Heart right ventricle (tissue), 16 donors: ENCODE measurements at regions of chr5 and their contacts with region 1.

Region 1: DNA sequence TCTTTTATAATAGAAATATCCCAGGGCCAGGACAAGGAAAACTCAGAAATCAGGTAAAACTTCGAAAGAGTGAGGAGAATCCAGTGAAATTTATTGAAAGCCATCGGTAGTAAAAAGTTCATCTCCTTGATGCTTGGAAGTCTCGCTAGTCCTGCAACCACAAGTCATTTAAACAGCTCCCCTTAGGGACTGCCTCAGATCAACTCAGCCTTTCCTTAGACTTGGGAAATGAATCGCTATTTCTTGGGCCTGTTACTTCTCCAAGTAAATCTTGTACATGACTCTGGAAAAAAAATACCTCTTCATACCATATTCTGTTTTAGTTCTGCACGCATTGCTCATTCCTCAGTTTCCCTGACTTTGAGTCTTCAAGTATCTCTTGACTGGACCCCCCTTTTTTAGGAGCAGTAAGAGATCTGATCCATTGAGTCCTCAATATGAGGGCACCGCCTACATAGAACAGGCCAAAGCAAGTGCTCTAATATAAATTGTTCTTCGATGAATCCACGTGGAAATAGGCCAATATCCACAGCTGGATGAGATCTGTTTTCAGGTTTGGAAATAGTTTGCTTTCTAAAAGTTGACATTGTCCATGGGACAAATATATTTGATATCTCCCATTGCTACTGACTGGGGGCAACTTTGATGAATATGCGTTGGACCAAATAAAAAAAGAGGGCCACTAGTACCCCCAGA is 114.2 kb downstream of the PRDM6 start:
- DNase-seq: no peak
- ATAC-seq: peak in 4 of 8 donors; percentile 12 to 53 (median 51)
- H3K4me3 ChIP-seq: no peak overlapping the region
- H3K27ac ChIP-seq: no peak overlapping the region
- H3K4me1 ChIP-seq: peaks cover 0 to 6% (median 0%) of the 10 kb centered on the region in 9 donors
- H3K27me3 ChIP-seq: no peaks in the 10 kb centered on the region
- CTCF ChIP-seq: no peak

Region 2: GRCh38 chr5:122697191-122697590 is 506.1 kb before region 1 on chr5:
- intact Hi-C with region 1: loop called in 1 of 10 experiments (anchors 5 kb)
- DNase-seq: no peak
- ATAC-seq: no peak
- H3K4me3 ChIP-seq: no peak overlapping the region
- H3K27ac ChIP-seq: peak overlapping the region in 1 of 10 donors; percentile 47
- H3K4me1 ChIP-seq: peaks cover 0 to 15% (median 0%) of the 10 kb centered on the region in 9 donors
- H3K27me3 ChIP-seq: no peaks in the 10 kb centered on the region
- CTCF ChIP-seq: no peak

Region 3: DNA sequence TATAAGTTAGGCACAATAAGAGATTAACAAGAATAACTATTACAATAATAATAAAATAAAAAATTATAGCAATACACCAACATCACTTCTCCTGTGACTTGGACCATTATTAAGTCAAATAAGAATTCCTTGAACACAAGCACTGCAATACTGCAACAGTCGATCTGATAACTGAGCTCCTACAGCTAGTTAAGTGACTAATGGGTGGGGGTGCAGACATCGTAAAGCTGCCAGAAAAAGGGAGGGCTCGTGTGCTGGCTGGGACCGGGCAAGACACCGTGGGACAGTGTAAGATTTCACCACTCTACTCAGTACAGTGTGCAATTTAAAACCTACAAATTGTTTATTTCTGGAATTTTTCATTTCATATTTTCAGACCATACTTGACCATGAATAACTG is 279.1 kb before region 1 on chr5:
- intact Hi-C with region 1: no loop called
- DNase-seq: no peak
- ATAC-seq: peak in 1 of 8 donors; percentile 37
- H3K4me3 ChIP-seq: no peak overlapping the region
- H3K27ac ChIP-seq: no peak overlapping the region
- H3K4me1 ChIP-seq: peaks cover 0 to 5% (median 0%) of the 10 kb centered on the region in 9 donors
- H3K27me3 ChIP-seq: no peaks in the 10 kb centered on the region
- CTCF ChIP-seq: no peak

Region 4: DNA sequence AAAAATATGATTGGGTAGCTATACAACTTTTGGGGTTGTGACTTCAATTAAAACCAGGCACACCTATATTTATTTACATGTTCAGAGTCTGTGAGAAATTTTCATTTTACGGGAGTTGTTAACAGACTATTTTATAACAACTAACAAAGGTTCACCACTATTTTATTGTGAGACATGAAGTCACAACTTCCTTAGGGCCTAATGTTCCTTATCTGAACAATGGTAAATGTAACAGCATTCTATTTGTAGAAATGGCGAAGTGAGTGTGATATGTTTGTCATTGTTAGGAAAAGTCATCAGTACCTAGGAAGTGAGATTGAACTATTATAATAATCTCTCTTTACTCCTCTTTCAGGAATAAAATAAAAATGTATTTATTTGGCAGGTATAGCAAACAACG is 376.2 kb after region 1 on chr5:
- intact Hi-C with region 1: no loop called
- DNase-seq: no peak
- ATAC-seq: peak in 6 of 8 donors; percentile 34 to 92 (median 84)
- H3K4me3 ChIP-seq: no peak overlapping the region
- H3K27ac ChIP-seq: peak overlapping the region; percentile 26 to 77 (median 54)
- H3K4me1 ChIP-seq: peaks cover 0 to 28% (median 7%) of the 10 kb centered on the region in 9 donors
- H3K27me3 ChIP-seq: no peaks in the 10 kb centered on the region
- CTCF ChIP-seq: no peak